ENCODE measurements at regions of chr1 and their contacts with region 1.

Region 1: DNA sequence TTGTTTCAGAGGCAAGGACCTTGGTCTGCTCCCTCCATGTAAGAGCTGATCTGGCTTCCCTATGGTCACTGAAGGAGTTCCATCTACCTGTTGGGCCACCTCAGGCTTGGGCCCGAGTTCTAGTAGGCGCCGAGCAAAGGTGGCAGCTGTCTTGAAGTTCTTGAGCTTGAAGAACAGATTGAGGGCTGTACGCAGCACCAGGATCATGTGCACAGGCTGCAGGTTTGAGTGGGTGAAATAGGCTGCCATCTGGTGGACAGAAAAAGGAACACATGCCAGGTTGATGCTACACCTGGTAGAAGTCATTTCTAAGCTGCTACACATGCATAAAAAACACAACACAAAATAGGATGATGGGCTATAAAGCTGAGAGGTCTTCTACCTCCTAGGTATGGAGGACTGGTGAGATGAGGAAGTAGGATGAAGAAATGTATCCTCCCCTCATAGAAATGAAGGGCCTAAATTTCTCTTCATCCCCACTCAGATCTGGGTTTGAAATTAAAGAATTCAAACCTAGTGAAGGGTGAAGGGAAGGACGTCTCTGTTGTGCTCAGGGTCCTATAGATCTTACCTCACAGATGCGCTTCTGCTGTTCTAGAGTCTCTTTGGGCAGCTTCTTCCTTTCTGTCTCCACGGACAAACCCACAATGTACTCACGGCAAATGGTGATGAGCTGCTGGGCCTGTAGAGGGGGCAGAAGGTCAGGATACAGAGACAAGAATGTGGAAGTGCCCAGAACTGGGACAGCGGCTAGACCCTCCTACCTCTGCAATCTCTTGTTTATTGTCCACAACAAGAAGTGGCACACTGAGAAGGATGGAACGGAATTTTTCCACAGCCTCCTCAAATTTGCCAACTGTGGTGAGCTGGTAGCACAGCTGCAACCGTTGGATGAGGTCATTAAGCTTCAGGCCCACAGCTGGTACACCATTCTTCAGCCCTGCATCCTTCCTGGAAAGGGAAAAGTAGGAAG is 6.6 kb upstream of the PEX19 start:
- DNase-seq: no peak
- H3K4me3 ChIP-seq: no peak overlapping the region
- H3K27ac ChIP-seq: no peak overlapping the region
- H3K4me1 ChIP-seq: no peaks in the 10 kb centered on the region
- H3K27me3 ChIP-seq: no peaks in the 10 kb centered on the region
- CTCF ChIP-seq: peak; percentile 53 to 68 (median 65)
- POLR2A ChIP-seq: no peak

Region 2: GRCh38 chr1:160018900-160019299 is 272.6 kb before region 1 on chr1:
- intact Hi-C with region 1: no loop called
- DNase-seq: no peak
- H3K4me3 ChIP-seq: no peak overlapping the region
- H3K27ac ChIP-seq: no peak overlapping the region
- H3K4me1 ChIP-seq: no peaks in the 10 kb centered on the region
- H3K27me3 ChIP-seq: no peaks in the 10 kb centered on the region
- CTCF ChIP-seq: no peak
- POLR2A ChIP-seq: no peak

Region 3: DNA sequence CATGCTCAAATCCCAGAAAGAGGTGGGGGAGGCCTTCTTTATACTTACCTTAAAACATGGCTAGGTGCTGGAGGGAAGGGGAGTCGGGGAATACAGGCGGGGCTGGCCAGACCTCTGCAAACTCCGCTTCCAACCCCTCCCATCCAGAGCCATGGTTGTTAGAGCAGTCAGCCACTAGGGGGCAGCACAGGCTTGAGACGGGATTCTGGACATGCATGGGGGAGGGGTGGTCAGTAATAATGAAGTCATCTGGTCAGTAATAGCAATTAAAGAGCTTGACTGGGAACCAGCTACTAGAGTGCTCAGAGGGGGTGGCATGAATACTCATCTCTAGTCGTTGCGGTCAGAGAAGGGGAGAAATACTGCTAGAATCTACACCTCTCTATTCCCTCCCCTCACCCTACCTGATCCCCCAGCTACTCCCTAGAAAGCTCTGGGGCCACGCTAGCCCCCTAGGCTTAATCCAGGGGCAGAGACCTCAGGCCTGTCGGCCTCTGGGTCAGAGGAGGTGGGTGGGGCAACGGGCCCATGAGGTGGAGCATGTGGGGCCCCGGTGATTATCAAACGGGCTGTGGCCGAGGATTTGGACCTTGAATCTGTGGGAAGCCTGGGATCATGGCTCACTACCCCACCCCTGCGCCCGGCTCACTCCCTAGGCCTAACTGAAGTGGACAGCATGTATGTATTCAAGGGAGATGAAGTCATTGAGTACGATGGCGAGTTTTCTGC is 98.3 kb before region 1 on chr1:
- intact Hi-C with region 1: loop called (anchors 5 kb)
- DNase-seq: no peak
- H3K4me3 ChIP-seq: no peak overlapping the region
- H3K27ac ChIP-seq: no peak overlapping the region
- H3K4me1 ChIP-seq: peaks cover 19% of the 10 kb centered on the region
- H3K27me3 ChIP-seq: no peaks in the 10 kb centered on the region
- CTCF ChIP-seq: peak; percentile 84 to 99 (median 99)
- POLR2A ChIP-seq: no peak